Activated CD4-positive, alpha-beta T cell treated with anti-CD3 and anti-CD28 coated beads for 36 hours (primary cell): ENCODE measurements at regions of chr14 and their contacts with region 1.

Region 1: DNA sequence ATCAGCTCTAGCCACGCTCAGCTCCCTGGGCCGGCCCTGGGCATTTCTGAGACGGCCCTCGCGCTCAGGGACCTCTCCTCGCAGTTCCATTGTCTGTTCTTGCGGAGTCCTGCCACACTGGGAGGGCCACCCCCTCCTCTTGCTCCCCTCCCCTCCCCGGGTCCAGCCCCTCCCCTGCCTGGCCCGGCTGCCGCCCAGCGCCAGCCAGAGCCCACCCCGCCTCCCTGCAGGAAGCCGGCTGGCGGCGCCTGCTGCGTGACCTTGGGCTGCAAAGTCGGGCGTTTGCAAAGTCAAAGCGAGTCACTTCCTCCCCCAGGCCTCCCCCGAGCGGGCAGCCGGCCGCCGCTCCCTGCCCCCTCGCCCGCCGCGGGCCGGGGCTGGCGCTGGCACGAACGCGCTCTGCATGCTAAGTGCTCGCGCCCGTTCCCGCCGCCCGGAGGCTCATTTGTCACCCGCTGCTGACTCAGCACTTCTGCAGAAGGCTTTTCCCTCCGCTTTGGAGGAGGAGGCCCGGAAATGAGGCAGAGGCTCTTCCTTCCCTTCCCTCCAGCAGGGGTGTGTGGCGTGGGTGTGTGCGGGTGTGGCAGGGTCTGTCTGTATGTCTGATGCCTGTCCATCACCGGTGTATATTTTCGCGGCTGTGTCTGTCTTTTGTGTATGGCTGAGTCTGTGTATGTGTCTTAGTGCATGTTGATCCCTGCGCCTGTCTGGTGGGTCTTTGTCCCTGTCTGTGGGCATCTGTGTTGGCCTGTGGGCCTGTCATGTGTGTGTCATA is 72.0 kb downstream of the IRF2BPL start:
- DNase-seq: peak; percentile 96
- ATAC-seq: peak; percentile 62
- H3K4me3 Mint-ChIP-seq: peak overlapping the region; percentile 71
- H3K27ac Mint-ChIP-seq: peak overlapping the region; percentile 91
- H3K4me1 Mint-ChIP-seq: peaks cover 81% of the 10 kb centered on the region
- H3K27me3 Mint-ChIP-seq: no peaks in the 10 kb centered on the region

Region 2: GRCh38 chr14:76918751-76919543 is 37.6 kb before region 1 on chr14:
- CTCF ChIA-PET with region 1: interaction called, 5 read pairs
- POLR2A ChIA-PET with region 1: no interaction called
- intact Hi-C with region 1: loop called in 1 of 2 experiments (anchors 5 kb)
- DNase-seq: peak; percentile 65
- ATAC-seq: no peak
- H3K4me3 Mint-ChIP-seq: no peak overlapping the region
- H3K27ac Mint-ChIP-seq: no peak overlapping the region
- H3K4me1 Mint-ChIP-seq: peaks cover 59% of the 10 kb centered on the region
- H3K27me3 Mint-ChIP-seq: no peaks in the 10 kb centered on the region

Region 3: GRCh38 chr14:77033622-77034521 is 77.4 kb after region 1 on chr14:
- CTCF ChIA-PET with region 1: interaction called, 8 read pairs
- POLR2A ChIA-PET with region 1: interaction called, 6 read pairs
- intact Hi-C with region 1: loop called in 1 of 2 experiments (anchors 1 kb)
- DNase-seq: peak; percentile 94
- ATAC-seq: peak; percentile 77
- H3K4me3 Mint-ChIP-seq: peak overlapping the region; percentile 89
- H3K27ac Mint-ChIP-seq: peak overlapping the region; percentile 97
- H3K4me1 Mint-ChIP-seq: peaks cover 76% of the 10 kb centered on the region
- H3K27me3 Mint-ChIP-seq: no peaks in the 10 kb centered on the region

Region 4: GRCh38 chr14:77040059-77040740 is 83.7 kb after region 1 on chr14:
- CTCF ChIA-PET with region 1: interaction called, 11 read pairs
- POLR2A ChIA-PET with region 1: interaction called, 8 read pairs
- intact Hi-C with region 1: loop called (anchors 1 kb)
- DNase-seq: peak; percentile 98
- ATAC-seq: peak; percentile 66
- H3K4me3 Mint-ChIP-seq: peak overlapping the region; percentile 63
- H3K27ac Mint-ChIP-seq: peak overlapping the region; percentile 93
- H3K4me1 Mint-ChIP-seq: peaks cover 89% of the 10 kb centered on the region
- H3K27me3 Mint-ChIP-seq: no peaks in the 10 kb centered on the region

Region 5: GRCh38 chr14:77133720-77134338 is 177.3 kb after region 1 on chr14:
- CTCF ChIA-PET with region 1: no interaction called
- POLR2A ChIA-PET with region 1: no interaction called
- intact Hi-C with region 1: no loop called
- DNase-seq: peak; percentile 83
- ATAC-seq: peak; percentile 95
- H3K4me3 Mint-ChIP-seq: no peak overlapping the region
- H3K27ac Mint-ChIP-seq: no peak overlapping the region
- H3K4me1 Mint-ChIP-seq: no peaks in the 10 kb centered on the region
- H3K27me3 Mint-ChIP-seq: peaks cover 53% of the 10 kb centered on the region